Naive thymus-derived CD4-positive, alpha-beta T cell (primary cell): ENCODE measurements at regions of chr2 and their contacts with region 1.

Region 1: GRCh38 chr2:188114014-188114413 is 177.7 kb upstream of the GULP1 start:
- DNase-seq: no peak
- ATAC-seq: no peak
- H3K4me3 ChIP-seq: no peak overlapping the region
- H3K4me3 Mint-ChIP-seq: no peak overlapping the region
- H3K27ac ChIP-seq: no peak overlapping the region
- H3K27ac Mint-ChIP-seq: no peak overlapping the region
- H3K4me1 ChIP-seq: no peaks in the 10 kb centered on the region
- H3K4me1 Mint-ChIP-seq: peaks cover 0 to 6% (median 0%) of the 10 kb centered on the region in 7 donors
- H3K27me3 ChIP-seq: no peaks in the 10 kb centered on the region
- H3K27me3 Mint-ChIP-seq: no peaks in the 10 kb centered on the region

Region 2: GRCh38 chr2:187299122-187299906 is 814.7 kb before region 1 on chr2:
- CTCF ChIA-PET with region 1: no interaction called
- POLR2A ChIA-PET with region 1: no interaction called
- intact Hi-C with region 1: no loop called
- DNase-seq: no peak
- ATAC-seq: no peak
- H3K4me3 ChIP-seq: no peak overlapping the region
- H3K4me3 Mint-ChIP-seq: no peak overlapping the region
- H3K27ac ChIP-seq: no peak overlapping the region
- H3K27ac Mint-ChIP-seq: no peak overlapping the region
- H3K4me1 ChIP-seq: no peaks in the 10 kb centered on the region
- H3K4me1 Mint-ChIP-seq: no peaks in the 10 kb centered on the region
- H3K27me3 ChIP-seq: no peaks in the 10 kb centered on the region
- H3K27me3 Mint-ChIP-seq: no peaks in the 10 kb centered on the region

Region 3: DNA sequence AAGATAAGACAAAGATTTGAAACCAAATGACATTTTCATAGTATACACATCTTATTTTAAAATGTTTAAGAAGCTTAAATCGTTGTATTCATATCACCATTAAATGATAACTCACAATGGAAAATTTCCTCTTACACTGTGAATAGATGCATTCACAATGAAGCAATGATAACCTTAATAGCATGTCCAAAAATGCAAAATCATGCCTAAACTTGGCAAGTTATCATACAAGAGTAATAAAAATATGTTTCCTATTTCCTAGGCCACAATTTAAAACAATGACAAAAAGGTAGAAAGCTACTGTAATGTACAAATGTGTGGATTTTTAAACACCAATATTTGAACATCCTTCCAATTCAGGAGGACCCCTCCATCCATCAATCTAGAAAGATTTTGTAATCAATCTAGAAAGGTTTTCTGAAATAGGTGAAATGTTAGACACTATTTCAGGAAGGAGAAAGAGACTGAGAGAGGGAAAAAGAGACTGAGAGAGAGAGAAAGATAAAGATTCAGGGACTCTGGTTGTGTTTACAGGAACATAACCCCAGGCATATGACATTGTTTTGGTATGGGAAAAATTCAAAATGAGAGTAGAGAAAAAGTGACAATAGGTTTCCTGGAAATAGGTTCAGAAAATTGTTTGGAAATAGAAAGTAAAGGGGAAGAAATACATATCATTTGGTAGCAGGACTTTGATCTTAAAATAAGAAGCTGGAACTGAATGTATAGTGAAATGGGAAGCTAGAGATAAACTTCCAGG is 20.4 kb after region 1 on chr2:
- CTCF ChIA-PET with region 1: no interaction called
- POLR2A ChIA-PET with region 1: no interaction called
- intact Hi-C with region 1: loop called in 1 of 2 experiments (anchors 2 kb)
- DNase-seq: no peak
- ATAC-seq: no peak
- H3K4me3 ChIP-seq: no peak overlapping the region
- H3K4me3 Mint-ChIP-seq: no peak overlapping the region
- H3K27ac ChIP-seq: no peak overlapping the region
- H3K27ac Mint-ChIP-seq: no peak overlapping the region
- H3K4me1 ChIP-seq: no peaks in the 10 kb centered on the region
- H3K4me1 Mint-ChIP-seq: peaks cover 0 to 1% (median 0%) of the 10 kb centered on the region in 7 donors
- H3K27me3 ChIP-seq: no peaks in the 10 kb centered on the region
- H3K27me3 Mint-ChIP-seq: no peaks in the 10 kb centered on the region

Region 4: GRCh38 chr2:188158337-188159100 is 44.5 kb after region 1 on chr2:
- CTCF ChIA-PET with region 1: no interaction called
- POLR2A ChIA-PET with region 1: no interaction called
- intact Hi-C with region 1: loop called in 1 of 2 experiments (anchors 5 kb)
- DNase-seq: no peak
- ATAC-seq: no peak
- H3K4me3 ChIP-seq: no peak overlapping the region
- H3K4me3 Mint-ChIP-seq: no peak overlapping the region
- H3K27ac ChIP-seq: no peak overlapping the region
- H3K27ac Mint-ChIP-seq: no peak overlapping the region
- H3K4me1 ChIP-seq: no peaks in the 10 kb centered on the region
- H3K4me1 Mint-ChIP-seq: no peaks in the 10 kb centered on the region
- H3K27me3 ChIP-seq: no peaks in the 10 kb centered on the region
- H3K27me3 Mint-ChIP-seq: no peaks in the 10 kb centered on the region